AG04449 (cell line): ENCODE measurements at regions of chr14 and their contacts with region 1.

Region 1: DNA sequence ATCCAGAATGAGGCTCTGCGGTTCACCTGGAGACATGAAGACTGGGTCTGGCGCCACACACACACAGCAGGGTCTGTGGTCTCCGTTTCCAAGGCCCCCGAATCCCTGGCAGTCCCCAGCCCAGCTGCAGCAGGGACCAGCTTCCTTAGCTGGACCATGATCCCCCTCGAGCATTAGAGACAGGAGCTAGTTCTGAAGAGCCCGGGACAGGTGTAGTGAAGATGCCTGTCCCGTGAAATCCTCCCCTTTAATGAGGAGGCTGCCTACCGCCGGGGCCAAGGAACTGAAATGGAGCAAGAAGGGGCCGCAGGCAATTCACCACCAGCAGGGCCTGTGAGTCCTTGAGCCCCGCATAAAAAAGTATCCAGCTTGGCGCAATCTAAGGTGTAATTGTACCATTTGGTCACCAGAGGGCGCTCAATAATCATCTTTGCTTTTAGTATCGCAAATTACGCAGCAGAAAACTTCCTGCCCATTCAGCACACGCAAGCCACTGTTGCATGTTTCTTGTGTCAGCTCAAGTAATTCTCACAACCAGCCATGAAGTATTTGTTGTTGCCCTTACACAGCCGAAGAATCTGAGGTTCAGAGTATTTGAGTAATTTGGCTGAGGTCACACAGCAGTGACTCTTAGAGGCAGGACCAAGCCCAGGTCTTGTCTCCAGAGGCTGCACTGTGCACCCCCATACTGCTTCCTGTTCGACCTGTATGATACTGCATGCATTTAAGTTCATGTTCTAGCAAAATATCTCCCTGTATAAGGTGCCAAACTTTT is 54.3 kb upstream of the PPP2R5C start:
- DNase-seq: peak; percentile 36
- H3K4me3 ChIP-seq: no peak overlapping the region; the same call in 1 of the 2 replicates
- CTCF ChIP-seq: peak; percentile 61

Region 2: DNA sequence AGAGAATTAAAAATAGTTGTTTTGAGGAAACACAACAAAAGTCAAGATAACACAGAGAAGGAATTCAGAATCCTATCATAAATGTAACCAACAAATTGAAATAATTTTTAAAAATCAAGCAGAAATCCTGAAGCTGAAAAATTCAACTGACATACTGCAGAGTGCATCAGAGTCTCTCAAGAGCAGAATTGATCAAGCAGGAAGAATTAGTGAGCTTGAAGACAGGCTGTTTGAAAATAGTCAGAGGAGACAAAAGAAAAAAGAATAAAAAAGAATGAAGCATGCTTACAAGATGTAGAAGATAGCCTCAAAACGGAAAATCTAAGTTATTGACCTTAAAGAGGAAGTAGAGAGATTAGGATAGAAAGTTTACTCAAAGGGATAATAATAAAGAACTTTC is 11.6 kb before region 1 on chr14:
- CTCF ChIA-PET with region 1: interaction called, 15 read pairs
- POLR2A ChIA-PET with region 1: no interaction called
- DNase-seq: no peak
- H3K4me3 ChIP-seq: no peak overlapping the region
- CTCF ChIP-seq: no peak

Region 3: GRCh38 chr14:101755591-101756324 is 48.5 kb after region 1 on chr14:
- CTCF ChIA-PET with region 1: interaction called, 10 read pairs
- POLR2A ChIA-PET with region 1: no interaction called
- DNase-seq: no peak
- H3K4me3 ChIP-seq: no peak overlapping the region
- CTCF ChIP-seq: no peak

Region 4: GRCh38 chr14:101903111-101903561 is 195.9 kb after region 1 on chr14:
- CTCF ChIA-PET with region 1: no interaction called
- POLR2A ChIA-PET with region 1: no interaction called
- DNase-seq: no peak
- H3K4me3 ChIP-seq: no peak overlapping the region
- CTCF ChIP-seq: no peak

Region 5: GRCh38 chr14:101953151-101953550 is 245.9 kb after region 1 on chr14:
- CTCF ChIA-PET with region 1: interaction called, 11 read pairs
- POLR2A ChIA-PET with region 1: no interaction called
- DNase-seq: no peak
- H3K4me3 ChIP-seq: no peak overlapping the region
- CTCF ChIP-seq: no peak